ENCODE measurements at regions of chr12 and their contacts with region 1.

Region 1: DNA sequence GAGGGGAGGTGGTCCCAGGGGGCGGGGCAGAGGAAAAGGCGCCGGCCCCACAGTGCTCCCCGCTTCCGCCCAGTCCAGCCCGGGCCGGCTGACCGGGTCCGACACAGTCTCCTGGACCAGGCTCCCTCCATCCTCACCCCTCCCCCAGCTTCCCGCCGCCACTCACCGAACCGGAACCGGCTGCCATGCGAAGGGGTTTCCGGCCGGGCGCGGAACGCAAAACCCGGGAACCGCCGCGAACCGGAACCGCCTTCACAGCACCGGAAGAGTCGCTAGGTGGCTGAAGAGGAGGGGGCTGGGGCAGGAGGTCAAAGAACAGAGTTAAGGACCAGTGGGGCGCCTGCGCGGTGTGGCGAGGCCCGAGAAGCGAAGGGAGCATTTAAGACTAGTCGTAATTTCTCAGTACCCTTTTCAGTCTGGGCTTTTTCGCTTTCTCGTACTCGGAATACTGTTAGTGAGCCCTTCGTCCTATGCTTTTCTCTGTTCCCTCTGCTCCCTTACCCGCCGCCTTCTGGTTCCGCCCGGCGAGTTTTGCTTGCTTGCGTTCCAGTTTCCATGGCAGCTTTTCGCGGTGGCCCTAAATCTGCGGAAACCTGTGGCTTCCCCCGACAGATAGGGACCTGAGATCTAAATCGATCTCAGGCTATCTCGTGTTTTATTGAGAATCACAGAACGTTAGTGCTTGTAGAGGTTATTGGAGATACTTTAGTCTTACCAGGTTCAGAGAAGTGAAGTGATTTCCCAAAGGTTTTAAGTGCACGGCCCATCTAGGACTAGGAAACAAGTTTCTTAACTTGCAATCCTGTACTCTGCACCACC is at the start of gene SENP1:
- DNase-seq: peak; percentile 76 to 96 (median 88)
- ATAC-seq: peak; percentile 81 to 84
- H3K4me3 Mint-ChIP-seq: peak within 1 kb of the TSS; percentile 89 to 99 (median 94)
- H3K27ac Mint-ChIP-seq: peak within 1 kb of the TSS; percentile 96 to 100 (median 99)
- H3K4me1 Mint-ChIP-seq: peaks cover 27 to 58% (median 48%) of the 10 kb centered on the region in 4 donors
- H3K27me3 Mint-ChIP-seq: no peaks in the 10 kb centered on the region
- polyA plus RNA-seq, gene SENP1: 9.9 to 11.9 (median 10.2) TPM

Region 2: DNA sequence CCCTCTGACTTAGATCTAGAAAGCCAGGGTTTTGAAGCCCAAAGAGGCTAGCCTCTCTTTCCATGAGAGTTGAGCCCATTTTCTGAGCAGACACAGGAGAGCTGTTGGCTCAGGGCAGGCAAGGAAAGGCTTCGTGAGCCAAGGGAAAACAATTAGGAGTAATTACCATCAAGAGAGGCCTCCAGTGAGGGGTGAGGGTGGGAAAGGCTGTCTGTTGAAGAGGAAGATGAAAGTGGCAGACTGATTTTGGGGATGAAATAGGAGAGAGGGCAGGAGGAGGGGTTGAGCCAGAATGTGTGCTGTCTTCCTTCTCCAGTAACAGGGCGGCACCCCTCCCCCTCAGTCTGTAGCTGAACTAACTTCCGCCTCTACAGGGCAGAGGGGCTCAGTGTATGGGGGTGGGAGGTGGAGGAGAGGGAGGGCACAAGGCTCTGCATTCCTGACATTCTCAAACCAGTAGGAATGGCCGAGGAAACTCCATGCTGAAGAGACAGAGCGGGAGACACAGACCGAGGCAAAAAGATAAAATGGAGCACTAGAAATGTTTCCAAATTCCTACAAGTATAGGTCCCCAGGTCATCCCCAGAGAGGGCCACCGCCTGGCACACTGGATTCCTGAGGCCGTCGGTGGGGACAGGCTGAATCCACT is 68.7 kb before region 1 on chr12:
- POLR2A ChIA-PET with region 1: no interaction called
- DNase-seq: no peak
- ATAC-seq: no peak
- H3K4me3 Mint-ChIP-seq: no peak overlapping the region
- H3K27ac Mint-ChIP-seq: peak overlapping the region in 3 of 10 donors; percentile 59 to 72 (median 71)
- H3K4me1 Mint-ChIP-seq: peaks cover 6 to 15% (median 13%) of the 10 kb centered on the region in 4 donors
- H3K27me3 Mint-ChIP-seq: peaks cover 0 to 3% (median 0%) of the 10 kb centered on the region in 5 donors

Region 3: DNA sequence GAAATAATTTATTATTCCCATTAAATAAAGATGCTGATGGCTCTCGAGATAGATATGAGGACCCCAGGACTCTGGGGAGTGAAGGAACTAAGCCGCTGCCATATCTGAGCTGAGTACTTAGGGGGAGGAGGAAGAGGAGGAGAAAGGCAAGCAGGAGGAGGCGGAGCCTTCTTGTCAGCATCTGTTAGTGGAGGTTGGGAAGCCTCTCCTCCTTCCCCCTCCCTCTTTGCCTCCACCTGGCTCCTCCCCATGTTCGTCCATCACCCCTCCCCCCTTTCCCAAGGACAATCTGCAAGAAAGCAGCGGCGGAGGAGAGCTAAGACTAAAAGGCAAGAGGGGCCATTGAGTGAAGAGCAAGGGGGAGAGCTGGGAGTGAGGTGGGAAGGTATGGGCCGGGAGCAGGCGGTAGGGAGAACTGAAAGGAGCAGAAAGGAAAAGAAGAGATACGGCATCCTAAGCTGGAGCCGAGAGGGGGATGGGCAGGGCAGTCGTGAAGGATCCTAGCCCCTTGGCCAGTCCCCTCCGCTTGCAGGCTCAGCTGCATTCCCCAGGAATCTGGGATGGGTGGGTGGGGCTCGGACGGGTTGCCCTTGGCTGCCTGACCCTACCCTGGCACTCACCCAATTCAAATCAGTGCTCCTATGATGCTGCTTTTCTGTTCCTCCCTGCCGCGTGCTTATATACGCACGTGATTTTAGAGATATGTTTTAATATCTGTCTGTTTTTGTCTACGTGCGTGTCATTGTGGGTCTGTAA is 13.2 kb after region 1 on chr12 and contains the start of gene PFKM:
- POLR2A ChIA-PET with region 1: interaction called, 13 read pairs
- DNase-seq: peak; percentile 8 to 76 (median 45)
- ATAC-seq: peak; percentile 94 to 100
- H3K4me3 Mint-ChIP-seq: peak within 1 kb of the TSS; percentile 90 to 99 (median 96)
- H3K27ac Mint-ChIP-seq: peak within 1 kb of the TSS in 9 of 10 donors; percentile 53 to 95 (median 80)
- H3K4me1 Mint-ChIP-seq: peaks cover 16 to 23% (median 21%) of the 10 kb centered on the region in 4 donors
- H3K27me3 Mint-ChIP-seq: peaks cover 6 to 17% (median 15%) of the 10 kb centered on the region in 5 donors
- polyA plus RNA-seq, gene PFKM: 4.5 to 8.4 (median 4.6) TPM

Region 4: DNA sequence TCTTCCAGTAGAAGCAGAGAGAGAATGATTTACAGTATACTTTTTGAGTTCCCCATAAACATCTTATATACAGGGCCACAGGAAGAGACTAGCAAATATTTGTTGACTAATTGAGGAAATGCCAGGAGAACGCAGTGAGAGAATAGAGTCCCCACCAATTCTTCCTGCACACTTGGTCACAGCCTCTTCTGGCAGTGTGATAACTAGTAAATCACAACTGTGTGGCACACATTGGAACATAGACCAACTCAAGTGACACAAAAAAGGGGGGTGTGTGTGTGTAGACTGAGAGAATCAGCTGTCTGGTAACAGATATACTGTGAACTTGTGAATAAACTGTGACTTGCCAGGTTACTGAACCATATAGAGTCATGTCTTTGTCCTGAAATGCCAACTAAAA is 23.3 kb after region 1 on chr12:
- POLR2A ChIA-PET with region 1: no interaction called
- DNase-seq: no peak
- ATAC-seq: no peak
- H3K4me3 Mint-ChIP-seq: no peak overlapping the region
- H3K27ac Mint-ChIP-seq: no peak overlapping the region
- H3K4me1 Mint-ChIP-seq: no peaks in the 10 kb centered on the region
- H3K27me3 Mint-ChIP-seq: no peaks in the 10 kb centered on the region

Region 5: GRCh38 chr12:48157018-48157888 is 51.2 kb after region 1 on chr12 and contains the start of gene ASB8:
- POLR2A ChIA-PET with region 1: interaction called, 39 read pairs
- DNase-seq: peak; percentile 97 to 99 (median 99)
- ATAC-seq: peak; percentile 93
- H3K4me3 Mint-ChIP-seq: peak within 1 kb of the TSS; percentile 93 to 99 (median 96)
- H3K27ac Mint-ChIP-seq: peak within 1 kb of the TSS; percentile 98 to 100 (median 99)
- H3K4me1 Mint-ChIP-seq: peaks cover 24 to 56% (median 54%) of the 10 kb centered on the region in 4 donors
- H3K27me3 Mint-ChIP-seq: peaks cover 0 to 2% (median 0%) of the 10 kb centered on the region in 5 donors
- polyA plus RNA-seq, gene ASB8: 61.2 to 75.6 (median 64.4) TPM

Region 6: GRCh38 chr12:48316491-48316890 is 210.4 kb after region 1 on chr12:
- POLR2A ChIA-PET with region 1: no interaction called
- DNase-seq: no peak
- ATAC-seq: no peak
- H3K4me3 Mint-ChIP-seq: no peak overlapping the region
- H3K27ac Mint-ChIP-seq: no peak overlapping the region
- H3K4me1 Mint-ChIP-seq: peaks cover 0 to 1% (median 0%) of the 10 kb centered on the region in 4 donors
- H3K27me3 Mint-ChIP-seq: no peaks in the 10 kb centered on the region

Measured in naive thymus-derived CD8-positive, alpha-beta T cell (primary cell).